ENCODE measurements at regions of chr1 and their contacts with region 1.

Region 1: DNA sequence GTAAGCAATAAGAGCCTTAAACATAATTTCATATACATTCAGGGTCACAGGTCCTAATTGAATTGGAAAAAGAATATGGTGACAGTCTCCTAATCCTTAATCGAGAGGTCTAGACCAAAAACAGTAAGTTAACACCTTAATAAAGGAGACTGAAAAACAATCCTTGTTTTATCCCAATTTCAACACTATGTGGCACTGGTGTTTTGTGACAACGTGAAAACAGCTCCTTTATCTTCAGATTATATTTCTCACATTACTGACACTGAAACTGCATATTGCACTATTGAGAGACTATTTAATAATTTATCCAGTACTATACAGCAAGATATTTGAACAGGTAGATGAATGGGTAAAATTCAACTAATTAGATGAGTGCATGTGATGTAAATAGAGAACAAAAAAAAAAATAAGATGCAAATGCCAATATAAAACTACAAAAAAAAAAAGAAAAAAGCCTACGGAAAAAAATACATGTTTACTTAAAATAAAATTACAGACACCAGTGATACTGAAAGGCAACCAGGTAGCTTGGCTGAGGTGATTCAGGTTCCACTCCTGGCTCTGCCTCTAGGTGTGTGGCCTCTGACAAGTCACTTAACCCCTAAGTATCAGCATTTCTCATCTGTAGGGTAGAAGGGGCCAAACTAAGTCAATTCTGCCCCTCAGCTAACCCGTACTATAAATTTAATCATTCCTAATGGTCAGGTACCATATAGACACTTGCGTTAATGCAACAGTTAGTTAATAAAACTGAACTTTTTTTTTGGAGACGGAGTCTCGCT is 33.9 kb downstream of the TP53BP2 start:
- DNase-seq: peak; percentile 57
- ATAC-seq: peak; percentile 43
- H3K4me3 ChIP-seq: no peak overlapping the region
- H3K4me3 Mint-ChIP-seq: no peak overlapping the region
- H3K27ac ChIP-seq: no peak overlapping the region
- H3K27ac Mint-ChIP-seq: no peak overlapping the region
- H3K4me1 ChIP-seq: no peaks in the 10 kb centered on the region
- H3K4me1 Mint-ChIP-seq: peaks cover 9% of the 10 kb centered on the region
- H3K27me3 ChIP-seq: no peaks in the 10 kb centered on the region
- H3K27me3 Mint-ChIP-seq: no peaks in the 10 kb centered on the region
- CTCF ChIP-seq: peak; percentile 77

Region 2: GRCh38 chr1:223825767-223826748 is 14.2 kb after region 1 on chr1:
- CTCF ChIA-PET with region 1: interaction called, 19 read pairs
- POLR2A ChIA-PET with region 1: interaction called, 4 read pairs
- intact Hi-C with region 1: no loop called
- DNase-seq: no peak
- ATAC-seq: no peak
- H3K4me3 ChIP-seq: no peak overlapping the region
- H3K4me3 Mint-ChIP-seq: no peak overlapping the region
- H3K27ac ChIP-seq: no peak overlapping the region
- H3K27ac Mint-ChIP-seq: peak overlapping the region; percentile 64
- H3K4me1 ChIP-seq: peaks cover 31% of the 10 kb centered on the region in 2 donors
- H3K4me1 Mint-ChIP-seq: peaks cover 62% of the 10 kb centered on the region
- H3K27me3 ChIP-seq: no peaks in the 10 kb centered on the region
- H3K27me3 Mint-ChIP-seq: no peaks in the 10 kb centered on the region
- CTCF ChIP-seq: no peak

Region 3: GRCh38 chr1:224052772-224053171 is 240.9 kb after region 1 on chr1:
- CTCF ChIA-PET with region 1: interaction called, 40 read pairs
- POLR2A ChIA-PET with region 1: no interaction called
- intact Hi-C with region 1: no loop called
- DNase-seq: no peak
- ATAC-seq: no peak
- H3K4me3 ChIP-seq: no peak overlapping the region
- H3K4me3 Mint-ChIP-seq: no peak overlapping the region
- H3K27ac ChIP-seq: no peak overlapping the region
- H3K27ac Mint-ChIP-seq: no peak overlapping the region
- H3K4me1 ChIP-seq: peaks cover 0 to 3% of the 10 kb centered on the region in 2 donors
- H3K4me1 Mint-ChIP-seq: peaks cover 2% of the 10 kb centered on the region
- H3K27me3 ChIP-seq: peaks cover 0 to 3% (median 1%) of the 10 kb centered on the region in 4 experiments
- H3K27me3 Mint-ChIP-seq: peaks cover 19% of the 10 kb centered on the region
- CTCF ChIP-seq: no peak

Measured in B cell (primary cell).